Right cardiac atrium (tissue), 5 donors: ENCODE measurements at regions of chr5 and their contacts with region 1.

Region 1: DNA sequence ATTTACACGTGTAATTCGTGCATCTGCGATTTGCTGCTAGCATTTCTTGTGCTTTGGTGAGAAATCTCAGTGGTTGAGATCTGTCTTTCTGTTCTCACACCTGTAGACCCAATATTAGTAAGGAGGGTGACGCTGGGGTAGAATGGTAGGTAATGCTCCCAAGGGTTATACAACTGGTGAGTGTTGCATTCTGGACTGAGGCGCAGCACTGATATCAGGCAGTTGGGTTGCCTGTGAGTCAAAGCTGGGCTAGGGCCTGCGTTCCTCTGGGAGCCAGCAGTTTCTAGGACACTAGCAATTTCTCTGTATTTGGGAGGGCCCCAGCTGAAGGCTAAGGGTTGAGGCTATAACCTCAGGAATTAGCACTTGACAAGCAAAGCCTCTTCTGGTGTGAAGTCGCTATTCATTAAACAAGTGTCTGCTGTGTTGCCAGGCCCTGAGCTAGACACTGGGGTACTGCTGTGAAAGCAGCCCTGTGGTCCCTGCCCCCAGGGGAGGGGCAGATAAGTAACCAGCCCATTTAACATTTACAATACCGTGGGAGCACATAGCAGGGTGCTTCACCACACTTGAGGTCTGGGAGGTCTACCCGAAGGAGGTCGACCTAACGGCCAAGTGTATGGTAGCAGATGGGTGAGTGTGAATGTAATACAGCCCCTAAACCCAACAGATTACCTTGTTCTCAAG is 28.7 kb downstream of the LARP1 start:
- DNase-seq: peak; percentile 53 to 75 (median 67)
- ATAC-seq: peak; percentile 61 to 75
- H3K4me3 ChIP-seq: no peak overlapping the region
- H3K27ac ChIP-seq: peak overlapping the region; percentile 7
- H3K4me1 ChIP-seq: peaks cover 62% of the 10 kb centered on the region
- H3K27me3 ChIP-seq: no peaks in the 10 kb centered on the region

Region 2: GRCh38 chr5:154683101-154683880 is 100.6 kb before region 1 on chr5:
- intact Hi-C with region 1: loop called in 1 of 4 experiments (anchors 10 kb)
- DNase-seq: no peak
- ATAC-seq: no peak
- H3K4me3 ChIP-seq: peak overlapping the region; percentile 52
- H3K27ac ChIP-seq: peak overlapping the region; percentile 84
- H3K4me1 ChIP-seq: peaks cover 3% of the 10 kb centered on the region
- H3K27me3 ChIP-seq: no peaks in the 10 kb centered on the region

Region 3: GRCh38 chr5:154840435-154841272 is 56.7 kb after region 1 on chr5:
- intact Hi-C with region 1: no loop called
- DNase-seq: no peak
- ATAC-seq: peak in 1 of 2 donors; percentile 21
- H3K4me3 ChIP-seq: no peak overlapping the region
- H3K27ac ChIP-seq: no peak overlapping the region
- H3K4me1 ChIP-seq: peaks cover 4% of the 10 kb centered on the region
- H3K27me3 ChIP-seq: no peaks in the 10 kb centered on the region